Testis (tissue), 5 donors: ENCODE measurements at regions of chr6 and their contacts with region 1.

Region 1: DNA sequence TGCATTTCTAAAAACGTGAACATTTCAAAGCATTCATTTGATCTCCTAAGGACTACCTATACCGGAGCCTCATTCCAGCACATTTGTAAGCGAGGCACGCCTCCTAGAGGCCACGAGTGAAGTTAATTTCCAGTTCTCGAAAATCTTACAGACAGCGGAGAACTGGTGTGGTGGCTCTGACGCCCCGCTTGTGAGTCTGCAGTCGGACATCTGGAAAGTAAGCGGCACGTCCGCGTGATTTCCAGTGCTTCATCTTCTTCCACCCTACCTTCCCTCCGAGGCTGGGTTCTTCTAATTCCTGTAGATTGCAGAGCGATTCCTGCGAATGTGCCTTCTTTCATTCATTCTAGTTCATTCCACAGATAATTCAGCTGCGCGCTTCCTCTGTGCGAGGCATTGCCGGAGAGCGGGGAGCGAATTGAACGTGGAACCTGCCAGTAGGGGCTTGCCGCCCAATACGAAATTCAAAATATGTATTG is 810 bp upstream of the PRIM2 start:
- DNase-seq: peak; percentile 90
- H3K4me3 ChIP-seq: peak overlapping the region; percentile 60 to 62
- H3K27ac ChIP-seq: peak overlapping the region in 1 of 2 donors; percentile 65
- H3K4me1 ChIP-seq: no peaks in the 10 kb centered on the region
- H3K27me3 ChIP-seq: no peaks in the 10 kb centered on the region
- CTCF ChIP-seq: peak; percentile 62 to 81 (median 68)
- POLR2A ChIP-seq: no peak

Region 2: GRCh38 chr6:56902641-56903464 is 413.8 kb before region 1 on chr6:
- intact Hi-C with region 1: loop called (anchors 10 kb)
- DNase-seq: peak; percentile 32
- H3K4me3 ChIP-seq: no peak overlapping the region
- H3K27ac ChIP-seq: no peak overlapping the region
- H3K4me1 ChIP-seq: no peaks in the 10 kb centered on the region
- H3K27me3 ChIP-seq: no peaks in the 10 kb centered on the region
- CTCF ChIP-seq: peak in 2 of 3 experiments; percentile 47 to 66
- POLR2A ChIP-seq: no peak

Region 3: GRCh38 chr6:57267586-57268293 is 48.9 kb before region 1 on chr6:
- intact Hi-C with region 1: no loop called
- DNase-seq: peak; percentile 48
- H3K4me3 ChIP-seq: no peak overlapping the region
- H3K27ac ChIP-seq: no peak overlapping the region
- H3K4me1 ChIP-seq: no peaks in the 10 kb centered on the region
- H3K27me3 ChIP-seq: no peaks in the 10 kb centered on the region
- CTCF ChIP-seq: peak; percentile 27 to 35 (median 29)
- POLR2A ChIP-seq: no peak